Dendritic cell treated with granulocyte-macrophage colony-stimulating factor and Interleukin-4, amounts not matched to agents 40 ng/mL and 50 ng/mL, for 4 days (primary cell): ENCODE measurements at regions of chr10 and their contacts with region 1.

Region 1: GRCh38 chr10:6647811-6648526 is 67.9 kb upstream of the PRKCQ start:
- H3K4me3 Mint-ChIP-seq: no peak overlapping the region
- H3K27ac Mint-ChIP-seq: no peak overlapping the region
- H3K4me1 Mint-ChIP-seq: no peaks in the 10 kb centered on the region
- H3K27me3 Mint-ChIP-seq: peaks cover 4% of the 10 kb centered on the region

Region 2: GRCh38 chr10:6445501-6446316 is 202.3 kb before region 1 on chr10:
- intact Hi-C with region 1: loop called (anchors 5 kb)
- H3K4me3 Mint-ChIP-seq: peak overlapping the region; percentile 28
- H3K27ac Mint-ChIP-seq: no peak overlapping the region
- H3K4me1 Mint-ChIP-seq: no peaks in the 10 kb centered on the region
- H3K27me3 Mint-ChIP-seq: no peaks in the 10 kb centered on the region

Region 3: DNA sequence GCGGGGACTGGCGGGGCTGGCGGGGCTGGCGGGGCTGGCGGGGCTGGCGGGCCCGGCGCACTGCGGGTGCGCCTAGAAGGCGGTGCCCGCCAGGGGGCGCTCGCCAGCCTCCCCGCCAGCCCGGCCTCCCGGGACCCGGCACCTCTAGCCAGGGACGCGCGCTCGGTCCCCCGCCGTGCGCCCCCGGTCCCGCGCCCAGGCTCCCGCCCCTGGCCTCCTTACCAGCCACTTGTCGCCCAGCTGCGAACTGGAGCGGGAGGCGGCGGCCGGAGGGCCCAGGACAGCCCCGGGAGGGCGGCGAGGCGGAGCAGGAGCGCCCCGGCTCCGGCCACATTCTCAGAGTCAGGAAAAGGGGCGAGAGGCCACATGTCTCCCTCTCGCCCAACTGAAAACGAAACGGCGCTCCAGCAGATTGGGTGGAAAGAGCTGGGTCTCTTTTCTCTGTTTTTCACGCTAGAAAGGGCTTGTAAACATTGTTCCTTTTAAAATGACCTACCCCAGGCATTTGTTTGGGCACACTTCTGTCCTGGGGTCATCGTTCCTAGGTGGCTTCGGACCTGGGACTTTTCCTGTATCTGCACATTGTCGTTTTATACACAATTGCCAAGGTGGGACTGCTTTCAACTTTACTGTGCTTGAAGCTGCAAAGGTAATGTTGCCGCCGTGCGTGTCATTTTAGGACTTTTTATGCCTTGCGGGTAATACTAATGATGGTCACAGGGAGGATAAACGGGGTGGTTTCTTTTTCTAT is 67.5 kb before region 1 on chr10:
- intact Hi-C with region 1: loop called (anchors 5 kb)
- H3K4me3 Mint-ChIP-seq: peak overlapping the region; percentile 78
- H3K27ac Mint-ChIP-seq: peak overlapping the region; percentile 63
- H3K4me1 Mint-ChIP-seq: peaks cover 37% of the 10 kb centered on the region
- H3K27me3 Mint-ChIP-seq: peaks cover 40% of the 10 kb centered on the region